Heart right ventricle (tissue), 16 donors: ENCODE measurements at regions of chr18 and their contacts with region 1.

Region 1: DNA sequence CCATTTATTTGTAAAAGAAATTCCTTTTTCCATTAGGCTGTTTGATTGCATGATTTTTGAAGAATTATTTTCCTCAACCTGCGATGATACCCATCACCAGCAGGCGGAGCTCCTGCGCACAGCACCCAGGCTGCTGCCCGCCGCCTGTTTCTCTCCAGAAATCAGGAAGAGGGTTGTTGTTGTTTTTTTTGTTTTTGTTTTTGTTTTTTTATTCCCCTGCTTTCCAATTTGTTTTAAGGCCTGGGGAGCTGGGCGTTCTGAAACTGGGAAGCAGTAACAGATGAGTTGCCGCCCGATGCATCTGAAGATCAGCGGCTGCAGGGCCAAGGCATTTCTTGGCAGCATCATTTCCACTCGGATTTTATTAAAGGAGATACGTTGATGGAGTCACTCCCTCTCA is 132.1 kb downstream of the MBP start:
- DNase-seq: peak in 1 of 2 donors; percentile 58
- ATAC-seq: peak in 5 of 8 donors; percentile 18 to 61 (median 51)
- H3K4me3 ChIP-seq: peak overlapping the region in 5 of 10 donors; percentile 7 to 41 (median 26)
- H3K27ac ChIP-seq: peak overlapping the region in 1 of 10 donors; percentile 25
- H3K4me1 ChIP-seq: peaks cover 0 to 25% (median 4%) of the 10 kb centered on the region in 9 donors
- H3K27me3 ChIP-seq: no peaks in the 10 kb centered on the region
- CTCF ChIP-seq: peak; percentile 86 to 98 (median 95)

Region 2: DNA sequence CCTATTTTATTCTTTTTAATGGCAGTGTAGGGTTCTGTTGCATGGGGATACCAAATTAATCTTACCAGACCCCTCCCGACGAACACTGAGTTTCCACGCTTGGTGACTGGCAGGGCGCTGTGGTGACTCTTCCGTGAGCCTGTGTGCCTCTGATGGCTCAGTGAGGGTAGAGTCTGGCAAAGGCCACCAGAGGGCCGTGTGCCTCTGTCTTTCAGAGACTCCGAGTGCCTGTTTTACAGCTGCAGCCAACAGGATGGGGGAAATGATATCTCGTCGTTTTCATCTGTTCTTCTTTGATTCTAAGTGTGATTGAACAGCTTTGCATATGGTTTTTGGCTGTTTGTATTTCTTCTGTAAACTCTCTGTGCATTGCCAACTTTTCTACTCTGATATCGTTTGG is 78.4 kb before region 1 on chr18:
- intact Hi-C with region 1: no loop called
- DNase-seq: peak; percentile 27 to 31
- ATAC-seq: peak; percentile 80 to 93 (median 86)
- H3K4me3 ChIP-seq: no peak overlapping the region
- H3K27ac ChIP-seq: no peak overlapping the region
- H3K4me1 ChIP-seq: no peaks in the 10 kb centered on the region
- H3K27me3 ChIP-seq: no peaks in the 10 kb centered on the region
- CTCF ChIP-seq: peak in 8 of 9 donors; percentile 20 to 66 (median 56)

Region 3: DNA sequence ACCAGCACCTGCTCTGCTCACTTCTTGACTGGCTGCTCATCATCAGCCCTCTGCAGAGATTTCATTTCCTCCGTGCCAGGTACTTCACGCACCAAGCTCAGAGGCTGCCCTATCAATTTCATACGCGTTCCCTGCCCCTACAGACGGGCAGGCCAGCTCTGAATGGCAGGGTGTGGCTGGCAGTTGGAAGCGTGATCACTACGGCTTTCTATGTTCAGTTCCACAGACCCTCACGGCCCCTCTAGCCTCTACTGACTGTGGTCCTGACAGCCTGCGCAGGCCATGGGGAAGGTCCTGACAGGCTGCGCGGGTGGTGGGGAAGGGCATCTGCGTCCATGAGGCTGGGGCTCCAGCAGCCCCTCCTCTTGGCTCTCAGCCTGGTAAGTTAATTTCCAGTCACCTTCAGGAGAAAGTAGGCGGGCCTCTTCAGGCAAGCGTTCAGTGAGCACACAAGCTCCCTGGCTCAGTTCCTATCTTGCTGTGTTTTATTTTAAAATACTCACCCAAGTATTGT is 23.4 kb before region 1 on chr18:
- intact Hi-C with region 1: loop called in 1 of 10 experiments (anchors 2 kb)
- DNase-seq: no peak
- ATAC-seq: peak in 6 of 8 donors; percentile 25 to 73 (median 50)
- H3K4me3 ChIP-seq: peak overlapping the region in 3 of 10 donors; percentile 18 to 26 (median 24)
- H3K27ac ChIP-seq: no peak overlapping the region
- H3K4me1 ChIP-seq: peaks cover 0 to 16% (median 4%) of the 10 kb centered on the region in 9 donors
- H3K27me3 ChIP-seq: no peaks in the 10 kb centered on the region
- CTCF ChIP-seq: no peak

Region 4: GRCh38 chr18:77054606-77055428 is 54.3 kb after region 1 on chr18:
- intact Hi-C with region 1: loop called in 9 of 10 experiments (anchors 2 to 10 kb)
- DNase-seq: peak; percentile 80 to 81
- ATAC-seq: peak; percentile 76 to 83 (median 81)
- H3K4me3 ChIP-seq: peak overlapping the region in 1 of 10 donors; percentile 42
- H3K27ac ChIP-seq: peak overlapping the region in 9 of 10 donors; percentile 54 to 98 (median 76)
- H3K4me1 ChIP-seq: peaks cover 15 to 93% (median 52%) of the 10 kb centered on the region in 9 donors
- H3K27me3 ChIP-seq: no peaks in the 10 kb centered on the region
- CTCF ChIP-seq: peak in 8 of 9 donors; percentile 46 to 77 (median 64)

Region 5: DNA sequence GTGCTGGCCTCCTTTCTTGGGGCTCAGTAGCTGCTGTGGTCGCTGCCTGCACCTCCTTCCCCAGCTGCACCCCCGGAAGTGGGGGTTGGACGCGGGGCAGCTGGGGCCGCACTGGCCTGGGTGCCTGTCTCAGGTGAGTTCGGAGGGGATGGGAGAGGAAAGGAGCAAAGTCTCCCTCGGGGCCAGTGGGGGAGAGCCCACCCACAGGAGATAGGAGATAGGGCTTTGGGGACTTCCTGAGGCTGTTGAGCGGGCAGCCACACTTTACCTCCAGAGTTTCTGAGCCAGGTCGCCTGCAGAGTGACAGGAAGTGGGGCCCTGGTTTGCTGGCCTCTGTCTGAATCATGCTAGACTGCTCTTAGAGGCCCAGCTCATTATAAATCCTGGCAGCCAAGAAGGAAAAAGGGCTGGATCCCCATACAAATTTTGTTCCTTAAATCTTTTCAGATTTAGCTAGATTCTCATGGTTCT is 124.0 kb after region 1 on chr18:
- intact Hi-C with region 1: no loop called
- DNase-seq: no peak
- ATAC-seq: no peak
- H3K4me3 ChIP-seq: peak overlapping the region in 1 of 10 donors; percentile 13
- H3K27ac ChIP-seq: peak overlapping the region in 2 of 10 donors; percentile 28 to 59
- H3K4me1 ChIP-seq: peaks cover 5 to 73% (median 29%) of the 10 kb centered on the region in 9 donors
- H3K27me3 ChIP-seq: peaks cover 0 to 10% (median 0%) of the 10 kb centered on the region in 7 donors
- CTCF ChIP-seq: no peak

Region 6: GRCh38 chr18:77207540-77207939 is 207.0 kb after region 1 on chr18:
- intact Hi-C with region 1: loop called (anchors 1 to 10 kb)
- DNase-seq: peak; percentile 24 to 57
- ATAC-seq: peak in 7 of 8 donors; percentile 40 to 63 (median 54)
- H3K4me3 ChIP-seq: no peak overlapping the region
- H3K27ac ChIP-seq: peak overlapping the region in 6 of 10 donors; percentile 4 to 80 (median 24)
- H3K4me1 ChIP-seq: peaks cover 3 to 43% (median 16%) of the 10 kb centered on the region in 9 donors
- H3K27me3 ChIP-seq: no peaks in the 10 kb centered on the region
- CTCF ChIP-seq: peak in 8 of 9 donors; percentile 20 to 60 (median 48)

Region 7: GRCh38 chr18:77702686-77703085 is 702.2 kb after region 1 on chr18:
- intact Hi-C with region 1: loop called in 1 of 10 experiments (anchors 5 kb)
- DNase-seq: peak in 1 of 2 donors; percentile 10
- ATAC-seq: no peak
- H3K4me3 ChIP-seq: no peak overlapping the region
- H3K27ac ChIP-seq: no peak overlapping the region
- H3K4me1 ChIP-seq: no peaks in the 10 kb centered on the region
- H3K27me3 ChIP-seq: peaks cover 0 to 24% (median 6%) of the 10 kb centered on the region in 7 donors
- CTCF ChIP-seq: peak in 5 of 9 donors; percentile 21 to 48 (median 31)